ENCODE measurements at regions of chr1 and their contacts with region 1.

Region 1: GRCh38 chr1:100459358-100460114 is 78.4 kb upstream of the GPR88 start:
- DNase-seq: peak; percentile 64 to 65
- H3K4me3 ChIP-seq: no peak overlapping the region
- H3K27ac ChIP-seq: peak overlapping the region in 1 of 2 donors; percentile 30
- H3K4me1 ChIP-seq: no peaks in the 10 kb centered on the region
- H3K27me3 ChIP-seq: no peaks in the 10 kb centered on the region
- CTCF ChIP-seq: peak; percentile 38 to 86 (median 82)
- POLR2A ChIP-seq: no peak

Region 2: GRCh38 chr1:99808391-99809115 is 651.0 kb before region 1 on chr1:
- intact Hi-C with region 1: loop called (anchors 5 kb)
- DNase-seq: no peak
- H3K4me3 ChIP-seq: peak overlapping the region in 1 of 3 donors; percentile 40
- H3K27ac ChIP-seq: peak overlapping the region; percentile 45 to 58
- H3K4me1 ChIP-seq: no peaks in the 10 kb centered on the region
- H3K27me3 ChIP-seq: no peaks in the 10 kb centered on the region
- CTCF ChIP-seq: peak; percentile 18 to 73 (median 70)
- POLR2A ChIP-seq: no peak

Region 3: DNA sequence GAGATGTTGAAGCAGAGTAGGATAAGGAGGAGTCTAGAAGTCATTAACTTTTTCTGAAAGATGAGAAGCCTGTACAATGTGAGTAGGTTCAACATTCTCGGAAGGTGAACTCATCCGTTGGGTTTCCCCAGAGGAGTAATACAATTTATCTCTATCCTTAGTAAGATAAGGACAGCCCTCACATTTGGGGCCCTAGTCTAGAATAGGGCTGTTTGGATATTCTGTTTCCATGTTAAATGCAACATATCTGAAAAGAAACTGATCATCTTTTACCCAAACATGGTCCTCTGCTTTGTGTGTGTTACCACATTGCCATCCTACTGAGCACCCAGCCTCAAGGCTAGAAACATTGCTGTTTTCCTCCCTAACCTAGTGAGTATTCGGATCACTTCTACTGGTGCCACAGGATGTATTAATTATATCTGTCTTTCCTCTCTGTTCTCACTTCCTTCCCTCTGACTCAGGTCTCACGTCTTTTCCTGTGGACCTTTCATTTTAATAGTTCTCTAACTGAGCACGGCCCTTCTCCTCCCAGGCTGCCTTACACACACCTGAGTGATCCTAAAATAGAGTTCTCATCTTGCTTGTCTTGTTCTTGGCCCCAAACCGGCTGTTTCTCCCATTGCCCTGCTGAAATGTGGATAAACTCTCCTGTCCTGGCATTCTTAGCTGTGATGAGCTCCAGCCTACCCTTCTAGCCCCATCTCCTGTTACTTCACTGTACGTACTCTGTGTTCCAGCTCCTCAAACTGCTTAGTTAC is 15.5 kb before region 1 on chr1:
- intact Hi-C with region 1: no loop called
- DNase-seq: no peak
- H3K4me3 ChIP-seq: no peak overlapping the region
- H3K27ac ChIP-seq: peak overlapping the region in 1 of 2 donors; percentile 40
- H3K4me1 ChIP-seq: no peaks in the 10 kb centered on the region
- H3K27me3 ChIP-seq: no peaks in the 10 kb centered on the region
- CTCF ChIP-seq: no peak
- POLR2A ChIP-seq: no peak

Region 4: GRCh38 chr1:100474834-100475233 is 15.3 kb after region 1 on chr1:
- intact Hi-C with region 1: no loop called
- DNase-seq: no peak
- H3K4me3 ChIP-seq: no peak overlapping the region
- H3K27ac ChIP-seq: no peak overlapping the region
- H3K4me1 ChIP-seq: no peaks in the 10 kb centered on the region
- H3K27me3 ChIP-seq: no peaks in the 10 kb centered on the region
- CTCF ChIP-seq: no peak
- POLR2A ChIP-seq: no peak

Measured in breast epithelium (tissue), 4 donors.